Caco-2 (cell line): ENCODE measurements at regions of chrX and their contacts with region 1.

Region 1: GRCh38 chrX:55839485-55839884 is 121.9 kb downstream of the RRAGB start:
- DNase-seq: peak; percentile 45 to 81
- H3K4me3 ChIP-seq: no peak overlapping the region
- H3K4me3 Mint-ChIP-seq: no peak overlapping the region
- H3K27ac Mint-ChIP-seq: no peak overlapping the region
- H3K4me1 ChIP-seq: peaks cover 8% of the 10 kb centered on the region; the same call in 1 of the 2 replicates
- H3K4me1 Mint-ChIP-seq: no peaks in the 10 kb centered on the region
- H3K27me3 ChIP-seq: no peaks in the 10 kb centered on the region
- H3K27me3 Mint-ChIP-seq: no peaks in the 10 kb centered on the region
- CTCF ChIP-seq: no peak

Region 2: DNA sequence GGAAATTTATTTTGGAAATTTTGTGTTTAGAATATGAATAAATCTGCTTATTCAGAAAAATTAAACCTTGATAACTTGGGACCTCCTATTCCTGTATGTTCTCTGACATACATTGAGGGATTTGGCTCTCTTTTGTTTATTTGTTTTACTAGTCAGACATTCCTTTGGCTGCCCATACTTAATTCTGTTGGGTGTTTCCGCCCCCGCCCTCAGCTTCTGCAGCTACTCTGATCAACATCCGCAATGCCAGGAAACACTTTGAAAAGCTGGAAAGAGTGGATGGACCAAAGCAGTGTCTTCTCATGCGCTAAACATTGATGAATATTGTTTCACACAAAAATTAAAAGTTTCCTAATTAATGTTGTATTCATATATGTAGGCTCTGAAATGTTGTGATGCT is 81.5 kb before region 1 on chrX:
- CTCF ChIA-PET with region 1: no interaction called
- POLR2A ChIA-PET with region 1: no interaction called
- intact Hi-C with region 1: no loop called
- DNase-seq: no peak
- H3K4me3 ChIP-seq: no peak overlapping the region
- H3K4me3 Mint-ChIP-seq: no peak overlapping the region
- H3K27ac Mint-ChIP-seq: no peak overlapping the region
- H3K4me1 ChIP-seq: no peaks in the 10 kb centered on the region
- H3K4me1 Mint-ChIP-seq: no peaks in the 10 kb centered on the region
- H3K27me3 ChIP-seq: no peaks in the 10 kb centered on the region
- H3K27me3 Mint-ChIP-seq: no peaks in the 10 kb centered on the region
- CTCF ChIP-seq: no peak

Region 3: DNA sequence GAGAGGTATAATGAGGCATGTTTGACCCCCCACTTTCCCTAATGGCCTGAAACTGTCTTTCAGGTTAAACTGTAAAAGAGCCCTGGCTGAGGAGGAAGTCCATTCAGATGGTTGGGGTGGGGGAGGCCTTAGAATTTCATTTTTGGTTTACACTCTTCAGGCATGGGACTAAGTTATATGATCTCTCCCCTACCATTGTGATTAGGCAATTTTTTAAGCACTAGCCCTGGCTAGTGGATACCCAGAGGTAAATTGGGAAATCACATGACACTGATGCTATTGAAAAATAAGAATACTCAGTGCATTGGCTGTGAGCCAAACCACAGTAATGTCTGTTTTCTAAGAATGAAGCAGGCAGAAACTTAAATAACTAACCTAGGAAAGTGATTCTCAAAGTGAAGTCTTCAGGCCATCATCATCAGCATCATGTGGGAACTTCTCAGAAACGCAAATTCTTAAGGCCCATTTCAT is 27.7 kb after region 1 on chrX:
- CTCF ChIA-PET with region 1: no interaction called
- POLR2A ChIA-PET with region 1: no interaction called
- intact Hi-C with region 1: loop called (anchors 1 kb)
- DNase-seq: peak; percentile 1 to 31
- H3K4me3 ChIP-seq: no peak overlapping the region
- H3K4me3 Mint-ChIP-seq: no peak overlapping the region
- H3K27ac Mint-ChIP-seq: peak overlapping the region; percentile 49
- H3K4me1 ChIP-seq: peaks cover 7% of the 10 kb centered on the region
- H3K4me1 Mint-ChIP-seq: peaks cover 8% of the 10 kb centered on the region
- H3K27me3 ChIP-seq: no peaks in the 10 kb centered on the region
- H3K27me3 Mint-ChIP-seq: no peaks in the 10 kb centered on the region
- CTCF ChIP-seq: no peak